AG04449 (cell line): ENCODE measurements at regions of chr13 and their contacts with region 1.

Region 1: DNA sequence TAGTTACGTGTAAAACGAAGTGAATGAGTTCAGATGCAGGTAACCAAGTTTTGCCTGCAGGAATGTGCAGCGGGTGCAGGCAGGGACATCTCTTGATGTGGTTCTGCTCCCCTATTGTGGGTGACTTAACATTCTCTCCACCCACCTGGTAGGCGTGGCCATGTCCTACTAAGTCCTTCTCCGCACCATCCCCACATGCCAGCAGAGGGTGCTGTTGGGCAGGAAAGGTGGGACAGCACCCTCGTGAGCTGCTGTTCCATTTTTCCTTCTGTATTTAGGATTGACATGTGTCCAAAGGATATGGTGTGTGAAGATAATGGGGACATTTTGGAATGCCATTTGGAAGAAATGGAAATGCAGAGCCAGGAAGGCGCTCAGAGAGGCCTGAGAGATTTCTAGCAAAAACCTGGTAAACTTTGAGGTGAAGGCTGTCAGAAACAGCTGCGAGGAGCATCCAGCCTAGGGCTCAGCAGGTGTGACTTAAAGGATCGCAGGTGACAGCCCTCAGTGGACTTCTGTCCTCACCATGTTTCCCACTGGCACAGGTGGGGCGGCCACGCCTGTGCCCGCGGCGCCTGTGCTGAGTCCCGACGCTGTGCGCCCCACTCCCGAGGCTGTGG is 26.2 kb upstream of the MCF2L start:
- DNase-seq: peak; percentile 61
- H3K4me3 ChIP-seq: peak overlapping the region; percentile 52
- CTCF ChIP-seq: peak; percentile 97

Region 2: GRCh38 chr13:112443995-112444860 is 498.6 kb before region 1 on chr13:
- CTCF ChIA-PET with region 1: no interaction called
- POLR2A ChIA-PET with region 1: no interaction called
- DNase-seq: no peak
- H3K4me3 ChIP-seq: no peak overlapping the region
- CTCF ChIP-seq: peak; percentile 85

Region 3: DNA sequence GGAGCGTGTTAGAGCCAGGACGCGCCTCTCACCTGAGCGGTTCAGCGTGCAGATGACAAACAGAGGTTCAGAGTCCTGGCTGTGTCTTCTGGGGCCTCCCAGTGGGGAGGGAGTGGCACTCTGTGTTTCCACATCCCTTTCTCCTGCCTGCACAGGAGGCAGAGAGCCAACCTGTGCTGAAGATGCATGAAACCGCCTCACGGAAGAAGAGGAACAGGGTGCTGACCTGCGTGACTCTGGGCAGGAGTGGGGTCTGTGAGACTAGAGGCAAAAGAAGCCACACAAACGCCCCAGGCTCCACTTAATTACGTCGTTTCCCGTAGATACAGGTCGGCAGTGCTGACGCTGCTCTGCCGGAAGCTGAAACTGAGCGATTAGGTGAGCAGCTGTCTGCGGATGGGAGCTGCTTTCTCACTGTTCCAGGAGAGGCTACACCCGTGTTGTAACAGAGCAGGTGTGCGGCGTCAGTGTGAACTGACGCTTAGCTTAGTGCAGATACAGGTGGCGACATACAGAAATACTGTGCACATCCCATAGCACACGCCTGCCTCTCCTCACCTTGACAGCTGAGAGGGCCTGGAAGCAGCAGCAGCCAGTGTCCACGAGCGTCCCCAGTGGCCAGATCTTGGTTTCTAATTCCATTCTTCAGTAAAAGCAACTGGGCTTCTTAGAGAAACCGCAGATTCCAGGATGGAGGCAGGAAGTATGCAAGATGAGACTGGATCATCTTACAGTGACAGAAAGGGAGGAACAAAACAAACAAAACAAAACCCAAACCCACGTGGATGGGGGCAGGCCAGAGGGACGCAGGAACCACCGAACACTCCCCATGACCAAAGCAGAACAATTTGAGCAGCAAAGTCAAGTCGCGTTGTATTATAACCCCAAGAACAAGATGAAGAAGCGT is 11.5 kb before region 1 on chr13:
- CTCF ChIA-PET with region 1: interaction called, 26 read pairs
- POLR2A ChIA-PET with region 1: no interaction called
- DNase-seq: peak; percentile 37
- H3K4me3 ChIP-seq: no peak overlapping the region; the same call in 1 of the 2 replicates
- CTCF ChIP-seq: peak; percentile 79

Region 4: GRCh38 chr13:112953591-112954487 is 11.0 kb after region 1 on chr13:
- CTCF ChIA-PET with region 1: interaction called, 12 read pairs
- POLR2A ChIA-PET with region 1: no interaction called
- DNase-seq: no peak
- H3K4me3 ChIP-seq: no peak overlapping the region
- CTCF ChIP-seq: no peak

Region 5: DNA sequence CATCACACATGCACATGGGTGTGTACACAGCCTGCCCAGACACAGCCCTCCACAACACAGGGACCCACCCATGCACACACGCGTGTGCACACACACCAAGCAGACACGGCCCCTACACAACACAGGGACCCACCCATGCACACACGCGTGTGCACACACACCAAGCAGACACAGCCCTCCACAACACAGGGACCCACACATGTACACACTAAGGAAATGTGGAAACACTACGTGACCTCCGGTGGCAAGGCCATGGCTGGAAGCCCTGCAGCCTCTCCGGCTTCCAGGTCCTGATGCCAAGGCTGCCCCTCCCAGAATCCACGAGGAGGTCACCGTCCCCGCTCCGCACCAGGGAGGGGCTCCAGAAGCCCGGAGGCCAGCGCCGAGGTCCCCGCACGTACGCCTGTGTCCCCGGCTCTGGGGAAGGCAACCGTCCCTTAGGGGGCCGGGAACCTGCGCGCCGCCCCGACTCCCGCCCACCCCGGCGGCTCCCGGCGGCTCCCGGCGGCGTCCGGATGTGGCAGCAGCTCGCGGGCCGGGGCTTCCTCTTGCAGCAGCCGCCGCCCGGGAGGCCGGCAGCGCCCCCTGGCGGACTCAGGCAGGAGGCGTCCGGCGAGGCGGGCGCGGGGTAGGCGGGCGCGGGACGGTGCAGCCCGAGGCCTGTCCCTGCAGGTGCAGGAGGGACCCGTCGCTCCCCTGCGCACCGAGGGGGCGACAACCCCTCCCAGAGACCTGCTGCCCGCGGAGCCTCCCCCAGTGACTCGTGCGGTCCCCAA is 451.0 kb after region 1 on chr13:
- CTCF ChIA-PET with region 1: interaction called, 17 read pairs
- POLR2A ChIA-PET with region 1: no interaction called
- DNase-seq: no peak
- H3K4me3 ChIP-seq: peak overlapping the region; percentile 72
- CTCF ChIP-seq: peak; percentile 76

Region 6: GRCh38 chr13:113448885-113449692 is 506.3 kb after region 1 on chr13:
- CTCF ChIA-PET with region 1: interaction called, 24 read pairs
- POLR2A ChIA-PET with region 1: no interaction called
- DNase-seq: no peak
- H3K4me3 ChIP-seq: no peak overlapping the region
- CTCF ChIP-seq: no peak